Calu3 (cell line): ENCODE measurements at regions of chr11 and their contacts with region 1.

Region 1: GRCh38 chr11:56932572-56933220 is 56.0 kb upstream of the OR5AK2 start:
- DNase-seq: peak; percentile 60
- H3K4me3 Mint-ChIP-seq: peak overlapping the region; percentile 27
- H3K27ac Mint-ChIP-seq: peak overlapping the region; percentile 96
- H3K4me1 Mint-ChIP-seq: peaks cover 73% of the 10 kb centered on the region
- H3K27me3 Mint-ChIP-seq: no peaks in the 10 kb centered on the region
- CTCF ChIP-seq: no peak

Region 2: GRCh38 chr11:56474729-56475235 is 457.9 kb before region 1 on chr11:
- CTCF ChIA-PET with region 1: no interaction called
- intact Hi-C with region 1: no loop called
- DNase-seq: no peak
- H3K4me3 Mint-ChIP-seq: no peak overlapping the region
- H3K27ac Mint-ChIP-seq: no peak overlapping the region
- H3K4me1 Mint-ChIP-seq: no peaks in the 10 kb centered on the region
- H3K27me3 Mint-ChIP-seq: no peaks in the 10 kb centered on the region
- CTCF ChIP-seq: no peak

Region 3: GRCh38 chr11:56624661-56625110 is 308.0 kb before region 1 on chr11:
- CTCF ChIA-PET with region 1: no interaction called
- intact Hi-C with region 1: loop called (anchors 10 kb)
- DNase-seq: peak; percentile 51
- H3K4me3 Mint-ChIP-seq: no peak overlapping the region
- H3K27ac Mint-ChIP-seq: no peak overlapping the region
- H3K4me1 Mint-ChIP-seq: no peaks in the 10 kb centered on the region
- H3K27me3 Mint-ChIP-seq: peaks cover 13% of the 10 kb centered on the region
- CTCF ChIP-seq: peak; percentile 45

Region 4: GRCh38 chr11:56855217-56855616 is 77.5 kb before region 1 on chr11:
- CTCF ChIA-PET with region 1: no interaction called
- intact Hi-C with region 1: loop called (anchors 5 kb)
- DNase-seq: peak; percentile 11
- H3K4me3 Mint-ChIP-seq: no peak overlapping the region
- H3K27ac Mint-ChIP-seq: peak overlapping the region; percentile 59
- H3K4me1 Mint-ChIP-seq: peaks cover 59% of the 10 kb centered on the region
- H3K27me3 Mint-ChIP-seq: no peaks in the 10 kb centered on the region
- CTCF ChIP-seq: no peak

Region 5: GRCh38 chr11:56885177-56885576 is 47.5 kb before region 1 on chr11:
- CTCF ChIA-PET with region 1: no interaction called
- intact Hi-C with region 1: loop called (anchors 2 kb)
- DNase-seq: peak; percentile 79
- H3K4me3 Mint-ChIP-seq: peak overlapping the region; percentile 53
- H3K27ac Mint-ChIP-seq: peak overlapping the region; percentile 98
- H3K4me1 Mint-ChIP-seq: peaks cover 48% of the 10 kb centered on the region
- H3K27me3 Mint-ChIP-seq: no peaks in the 10 kb centered on the region
- CTCF ChIP-seq: no peak

Region 6: GRCh38 chr11:56910785-56911184 is 21.9 kb before region 1 on chr11:
- CTCF ChIA-PET with region 1: no interaction called
- intact Hi-C with region 1: loop called (anchors 2 kb)
- DNase-seq: peak; percentile 32
- H3K4me3 Mint-ChIP-seq: peak overlapping the region; percentile 57
- H3K27ac Mint-ChIP-seq: peak overlapping the region; percentile 97
- H3K4me1 Mint-ChIP-seq: peaks cover 37% of the 10 kb centered on the region
- H3K27me3 Mint-ChIP-seq: no peaks in the 10 kb centered on the region
- CTCF ChIP-seq: no peak

Region 7: DNA sequence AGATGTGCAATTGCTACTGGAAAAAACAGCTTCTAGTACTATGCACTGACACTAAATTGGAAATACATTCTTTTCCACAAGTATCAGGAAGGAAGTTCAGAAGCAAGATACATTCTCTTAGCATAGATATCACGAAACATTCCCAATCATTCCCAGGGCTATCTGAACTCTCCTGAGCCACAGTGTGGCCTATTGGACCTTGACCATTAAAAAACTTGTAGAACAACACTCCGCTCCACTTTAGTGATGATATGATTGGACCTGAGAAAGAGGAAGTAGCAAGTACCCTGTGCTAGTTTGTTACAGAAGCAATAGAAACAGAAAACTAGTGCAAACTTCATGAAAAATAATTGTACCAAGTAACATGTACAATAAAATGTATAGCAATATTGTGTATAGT is 44.6 kb after region 1 on chr11:
- CTCF ChIA-PET with region 1: no interaction called
- intact Hi-C with region 1: loop called (anchors 2 kb)
- DNase-seq: no peak
- H3K4me3 Mint-ChIP-seq: no peak overlapping the region
- H3K27ac Mint-ChIP-seq: no peak overlapping the region
- H3K4me1 Mint-ChIP-seq: peaks cover 20% of the 10 kb centered on the region
- H3K27me3 Mint-ChIP-seq: no peaks in the 10 kb centered on the region
- CTCF ChIP-seq: no peak